ENCODE measurements at regions of chr5 and their contacts with region 1.

Region 1: DNA sequence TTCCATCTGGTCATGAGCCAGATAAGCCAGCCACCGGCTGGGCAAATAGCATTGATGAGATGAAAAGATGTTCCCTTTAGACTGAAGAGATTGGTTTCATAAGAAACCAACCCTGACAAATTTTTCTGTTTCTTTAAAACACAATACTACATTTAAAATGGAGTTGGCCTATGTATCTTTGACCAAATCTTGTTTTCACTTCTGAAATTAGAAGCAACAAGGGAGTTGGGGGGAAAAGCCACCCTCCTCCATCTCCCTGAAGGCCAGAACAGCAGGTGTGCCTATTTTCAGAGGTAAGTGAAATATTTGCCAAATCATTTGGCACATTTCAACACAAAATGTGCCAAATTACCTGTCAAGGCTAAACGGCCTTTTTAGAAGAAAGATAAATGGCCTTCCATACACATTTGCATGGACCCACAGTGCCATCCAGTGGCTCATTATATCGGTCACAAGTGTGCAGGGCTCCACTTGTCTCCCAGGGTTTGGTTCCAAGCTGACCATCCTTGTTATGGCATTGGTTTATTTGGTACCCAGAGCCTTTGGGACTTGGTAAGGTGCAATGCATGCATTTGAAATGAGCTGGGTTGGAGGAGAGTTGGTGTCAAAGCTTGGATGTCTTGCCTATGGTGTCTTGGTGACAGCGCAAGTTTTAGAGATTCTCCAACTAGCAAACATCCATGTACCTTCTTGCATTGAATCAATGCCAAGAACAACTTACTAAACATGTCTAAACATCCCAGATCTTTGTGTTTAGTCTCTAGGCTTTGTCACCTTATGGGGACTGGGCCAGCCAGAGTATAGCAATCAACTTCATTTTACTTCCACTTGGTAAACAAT is 372.0 kb upstream of the KIF2A start:
- DNase-seq: peak in 9 of 10 donors; percentile 43 to 75 (median 60)
- H3K4me3 ChIP-seq: peak overlapping the region in 9 of 59 donors; percentile 4 to 41 (median 17)
- H3K27ac ChIP-seq: no peak overlapping the region
- H3K27me3 ChIP-seq: no peaks in the 10 kb centered on the region
- CTCF ChIP-seq: peak; percentile 28 to 88 (median 76)

Region 2: GRCh38 chr5:60677844-60678664 is 1256.0 kb before region 1 on chr5:
- intact Hi-C with region 1: loop called (anchors 5 to 10 kb)
- DNase-seq: peak in 1 of 10 donors; percentile 6
- H3K4me3 ChIP-seq: peak overlapping the region in 7 of 59 donors; percentile 2 to 43 (median 24)
- H3K27ac ChIP-seq: no peak overlapping the region
- H3K27me3 ChIP-seq: no peaks in the 10 kb centered on the region
- CTCF ChIP-seq: peak; percentile 47 to 85 (median 70)

Region 3: DNA sequence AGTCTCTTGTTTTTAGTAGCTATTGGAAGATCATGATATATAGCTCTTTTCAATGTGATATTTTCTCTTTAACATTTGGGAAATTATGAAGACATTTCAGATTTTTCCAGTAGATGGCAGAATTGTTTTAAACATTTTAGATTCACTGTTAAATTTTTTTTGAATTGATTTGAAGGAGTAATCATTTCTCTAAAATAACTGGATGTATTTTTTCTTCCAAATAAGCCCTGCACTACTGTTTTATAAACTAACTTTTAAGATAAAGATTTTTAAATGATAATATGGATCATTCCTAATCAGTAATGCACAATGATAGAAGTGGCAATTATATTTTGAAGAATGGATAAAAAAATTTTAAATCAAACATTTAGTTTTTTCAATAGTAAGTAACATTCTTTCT is 974.9 kb before region 1 on chr5:
- intact Hi-C with region 1: loop called in 1 of 2 experiments (anchors 2 kb)
- DNase-seq: no peak
- H3K4me3 ChIP-seq: no peak overlapping the region
- H3K27ac ChIP-seq: no peak overlapping the region
- H3K27me3 ChIP-seq: no peaks in the 10 kb centered on the region
- CTCF ChIP-seq: peak in 54 of 56 donors; percentile 24 to 75 (median 56)

Region 4: GRCh38 chr5:61055434-61056006 is 878.5 kb before region 1 on chr5:
- intact Hi-C with region 1: loop called in 1 of 2 experiments (anchors 5 kb)
- DNase-seq: no peak
- H3K4me3 ChIP-seq: no peak overlapping the region
- H3K27ac ChIP-seq: no peak overlapping the region
- H3K27me3 ChIP-seq: no peaks in the 10 kb centered on the region
- CTCF ChIP-seq: peak in 55 of 56 donors; percentile 31 to 76 (median 57)

Region 5: DNA sequence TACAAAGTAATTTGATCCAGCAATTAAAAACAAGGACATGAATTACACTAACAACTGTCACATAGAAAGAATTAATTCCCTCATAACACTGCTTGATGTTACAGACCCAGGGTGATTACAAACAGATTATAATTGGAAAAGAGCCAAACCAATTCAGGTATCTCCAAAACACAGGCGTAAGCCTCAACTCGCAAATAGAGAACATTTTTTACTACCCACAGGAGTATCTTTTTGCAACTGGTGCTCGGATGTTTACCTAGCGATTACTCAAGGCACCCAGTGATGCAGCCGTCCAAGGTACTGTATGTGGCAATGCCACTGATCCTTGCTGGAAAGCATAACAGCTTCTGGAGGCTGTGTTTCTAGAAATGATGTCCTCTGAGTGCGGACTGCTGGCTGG is 14.1 kb before region 1 on chr5:
- intact Hi-C with region 1: no loop called
- DNase-seq: no peak
- H3K4me3 ChIP-seq: no peak overlapping the region
- H3K27ac ChIP-seq: no peak overlapping the region
- H3K27me3 ChIP-seq: peaks cover 0 to 9% (median 0%) of the 10 kb centered on the region in 45 donors
- CTCF ChIP-seq: no peak

Region 6: DNA sequence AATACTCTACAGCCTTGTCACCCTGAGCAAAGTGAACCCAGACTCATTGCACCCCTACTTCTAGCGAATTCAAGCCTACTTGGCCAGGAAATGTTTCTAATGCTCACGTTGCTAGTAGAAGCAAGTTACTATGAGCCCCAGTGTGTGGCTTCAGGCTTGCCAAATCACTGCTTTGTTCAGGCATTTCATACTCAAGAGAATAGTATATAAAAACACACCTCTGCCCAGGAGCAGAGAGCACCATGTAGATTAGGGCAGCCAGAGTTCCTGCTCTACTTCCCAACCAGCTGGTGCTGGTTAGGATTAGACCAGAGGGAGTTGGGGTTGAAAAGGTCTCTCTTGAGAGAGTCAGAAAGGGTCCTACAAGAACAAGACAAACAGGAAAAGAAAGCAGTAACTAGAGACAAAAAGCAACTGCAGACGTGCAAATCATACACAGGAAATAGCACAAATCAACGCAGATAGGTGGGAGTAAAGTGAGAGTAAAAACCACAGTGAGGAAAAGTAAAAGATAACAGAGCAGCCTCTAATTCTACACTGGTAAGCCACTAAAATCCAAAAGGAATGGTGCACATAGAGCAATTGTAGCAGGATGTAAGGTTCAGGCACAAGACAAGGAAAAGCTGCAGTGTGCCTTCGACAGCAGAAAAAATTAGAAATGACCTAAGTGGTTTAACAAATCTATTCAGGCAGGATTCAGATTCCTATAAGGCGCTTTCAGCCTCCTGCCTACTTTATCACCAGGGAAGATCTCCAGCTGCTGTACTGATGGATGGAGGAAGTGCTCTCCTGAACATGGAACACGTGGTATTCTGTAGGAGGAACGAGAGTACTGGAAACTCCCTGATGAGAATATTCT is 322.4 kb after region 1 on chr5:
- intact Hi-C with region 1: no loop called
- DNase-seq: no peak
- H3K4me3 ChIP-seq: no peak overlapping the region
- H3K27ac ChIP-seq: peak overlapping the region in 3 of 59 donors; percentile 7 to 21 (median 10)
- H3K27me3 ChIP-seq: no peaks in the 10 kb centered on the region
- CTCF ChIP-seq: no peak

Measured in dorsolateral prefrontal cortex (tissue), 120 donors.